ENCODE measurements at regions of chr10 and their contacts with region 1.

Region 1: GRCh38 chr10:89271552-89271951 is 20.0 kb upstream of the LIPA start:
- DNase-seq: no peak
- ATAC-seq: no peak
- H3K4me3 ChIP-seq: no peak overlapping the region
- H3K27ac ChIP-seq: no peak overlapping the region
- H3K4me1 ChIP-seq: peaks cover 17% of the 10 kb centered on the region
- CTCF ChIP-seq: no peak
- EP300 ChIP-seq: no peak
- POLR2A ChIP-seq: no peak
- RAD21 ChIP-seq: no peak

Region 2: GRCh38 chr10:89389254-89389653 is 117.7 kb after region 1 on chr10:
- CTCF ChIA-PET with region 1: interaction called, 11 read pairs
- POLR2A ChIA-PET with region 1: no interaction called
- DNase-seq: peak in 1 of 2 experiments; percentile 57
- ATAC-seq: peak; percentile 44 to 64; a peak in 3 of 6 replicates
- H3K4me3 ChIP-seq: no peak overlapping the region
- H3K27ac ChIP-seq: no peak overlapping the region
- H3K4me1 ChIP-seq: peaks cover 13% of the 10 kb centered on the region
- CTCF ChIP-seq: peak; percentile 73
- EP300 ChIP-seq: no peak
- POLR2A ChIP-seq: no peak
- RAD21 ChIP-seq: peak; percentile 84 to 88

Region 3: DNA sequence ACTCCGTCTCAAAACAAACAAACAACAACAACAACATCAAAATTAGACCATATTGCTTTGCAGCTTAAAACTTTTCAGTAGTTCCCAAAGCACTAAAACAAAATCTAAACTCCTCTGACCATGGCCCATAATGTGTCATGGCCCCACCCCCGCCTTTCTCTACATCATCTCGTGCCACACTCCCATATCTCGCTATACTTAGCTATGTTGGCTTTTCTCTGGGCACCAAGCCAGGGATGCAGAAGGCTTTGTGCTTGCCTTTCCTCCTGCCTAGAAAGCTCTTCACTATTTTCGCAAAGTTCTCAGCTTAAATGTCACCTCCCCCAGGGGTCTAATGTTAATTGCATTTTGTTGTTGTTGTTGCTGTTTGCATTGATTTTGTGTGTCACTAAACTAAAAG is 279.0 kb after region 1 on chr10:
- CTCF ChIA-PET with region 1: no interaction called
- POLR2A ChIA-PET with region 1: no interaction called
- DNase-seq: no peak
- ATAC-seq: no peak
- H3K4me3 ChIP-seq: no peak overlapping the region
- H3K27ac ChIP-seq: peak overlapping the region in 1 of 2 experiments; percentile 34; a peak in 1 of 6 replicates
- H3K4me1 ChIP-seq: peaks cover 44% of the 10 kb centered on the region
- CTCF ChIP-seq: no peak
- EP300 ChIP-seq: no peak
- POLR2A ChIP-seq: no peak
- RAD21 ChIP-seq: no peak